T-cell (primary cell): ENCODE measurements at regions of chr2 and their contacts with region 1.

Region 1: DNA sequence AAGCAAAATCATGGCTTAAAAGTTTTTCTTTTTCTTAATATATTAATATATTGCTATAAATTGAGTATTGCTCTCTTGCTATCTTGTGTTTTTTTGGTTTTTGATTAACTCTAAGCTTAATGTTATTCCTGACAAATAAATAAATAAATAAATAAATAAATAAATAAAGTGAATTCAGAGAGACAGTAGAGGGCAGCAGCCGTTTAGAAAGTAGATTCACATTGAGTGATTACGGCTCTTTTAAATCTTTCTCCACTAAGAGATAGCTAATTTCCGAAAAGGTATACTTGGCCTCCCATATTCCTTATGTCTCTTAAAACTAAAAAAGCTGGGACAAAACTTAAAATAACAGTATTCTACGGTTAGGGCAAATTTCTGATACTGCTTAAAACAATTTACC is 34.3 kb downstream of the MSH2 start:
- DNase-seq: peak in 1 of 35 experiments; percentile 12
- ATAC-seq: no peak
- H3K4me3 ChIP-seq: no peak overlapping the region
- H3K4me3 Mint-ChIP-seq: no peak overlapping the region
- H3K27ac ChIP-seq: no peak overlapping the region
- H3K27ac Mint-ChIP-seq: no peak overlapping the region
- H3K4me1 ChIP-seq: no peaks in the 10 kb centered on the region
- H3K4me1 Mint-ChIP-seq: peaks cover 0 to 2% (median 0%) of the 10 kb centered on the region in 3 donors
- H3K27me3 ChIP-seq: no peaks in the 10 kb centered on the region
- H3K27me3 Mint-ChIP-seq: no peaks in the 10 kb centered on the region

Region 2: GRCh38 chr2:47414682-47415458 is 22.4 kb before region 1 on chr2:
- CTCF ChIA-PET with region 1: no interaction called
- POLR2A ChIA-PET with region 1: interaction called in 1 of 2 experiments, 10 read pairs
- DNase-seq: no peak
- ATAC-seq: no peak
- H3K4me3 ChIP-seq: no peak overlapping the region
- H3K4me3 Mint-ChIP-seq: no peak overlapping the region
- H3K27ac ChIP-seq: no peak overlapping the region
- H3K27ac Mint-ChIP-seq: no peak overlapping the region
- H3K4me1 ChIP-seq: no peaks in the 10 kb centered on the region
- H3K4me1 Mint-ChIP-seq: peaks cover 0 to 2% (median 0%) of the 10 kb centered on the region in 3 donors
- H3K27me3 ChIP-seq: no peaks in the 10 kb centered on the region
- H3K27me3 Mint-ChIP-seq: no peaks in the 10 kb centered on the region

Region 3: DNA sequence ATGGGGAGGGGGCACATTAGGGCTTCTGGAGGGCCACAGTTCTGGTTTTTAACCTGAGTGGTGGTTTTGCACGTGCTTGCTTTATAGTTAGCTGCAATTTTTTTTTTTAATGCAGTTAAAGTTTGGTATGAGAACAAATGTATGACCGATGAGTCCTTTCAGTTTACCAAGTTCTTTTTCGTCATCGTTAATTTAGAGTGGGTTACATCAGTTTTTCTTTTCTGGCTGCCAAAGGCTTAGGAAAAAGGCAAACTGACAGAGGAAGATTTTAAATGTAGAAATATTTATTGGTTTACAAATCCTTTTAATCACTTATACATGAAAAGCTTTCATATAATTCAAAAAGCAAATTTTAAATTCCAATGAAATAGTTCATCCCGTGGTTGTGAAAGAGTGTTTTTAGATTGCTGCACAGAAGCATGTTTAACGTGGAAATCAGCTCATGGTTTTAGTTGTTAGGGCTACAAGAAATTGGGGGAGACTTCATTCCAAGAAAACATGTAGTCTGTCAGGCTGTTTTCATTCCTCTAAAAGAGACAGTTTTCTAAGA is 48.5 kb after region 1 on chr2:
- CTCF ChIA-PET with region 1: no interaction called
- POLR2A ChIA-PET with region 1: interaction called in 1 of 2 experiments, 10 read pairs
- DNase-seq: no peak
- ATAC-seq: no peak
- H3K4me3 ChIP-seq: no peak overlapping the region
- H3K4me3 Mint-ChIP-seq: no peak overlapping the region
- H3K27ac ChIP-seq: no peak overlapping the region
- H3K27ac Mint-ChIP-seq: no peak overlapping the region
- H3K4me1 ChIP-seq: peaks cover 0 to 2% of the 10 kb centered on the region in 2 experiments
- H3K4me1 Mint-ChIP-seq: peaks cover 9 to 19% (median 12%) of the 10 kb centered on the region in 3 donors
- H3K27me3 ChIP-seq: no peaks in the 10 kb centered on the region
- H3K27me3 Mint-ChIP-seq: no peaks in the 10 kb centered on the region

Region 4: DNA sequence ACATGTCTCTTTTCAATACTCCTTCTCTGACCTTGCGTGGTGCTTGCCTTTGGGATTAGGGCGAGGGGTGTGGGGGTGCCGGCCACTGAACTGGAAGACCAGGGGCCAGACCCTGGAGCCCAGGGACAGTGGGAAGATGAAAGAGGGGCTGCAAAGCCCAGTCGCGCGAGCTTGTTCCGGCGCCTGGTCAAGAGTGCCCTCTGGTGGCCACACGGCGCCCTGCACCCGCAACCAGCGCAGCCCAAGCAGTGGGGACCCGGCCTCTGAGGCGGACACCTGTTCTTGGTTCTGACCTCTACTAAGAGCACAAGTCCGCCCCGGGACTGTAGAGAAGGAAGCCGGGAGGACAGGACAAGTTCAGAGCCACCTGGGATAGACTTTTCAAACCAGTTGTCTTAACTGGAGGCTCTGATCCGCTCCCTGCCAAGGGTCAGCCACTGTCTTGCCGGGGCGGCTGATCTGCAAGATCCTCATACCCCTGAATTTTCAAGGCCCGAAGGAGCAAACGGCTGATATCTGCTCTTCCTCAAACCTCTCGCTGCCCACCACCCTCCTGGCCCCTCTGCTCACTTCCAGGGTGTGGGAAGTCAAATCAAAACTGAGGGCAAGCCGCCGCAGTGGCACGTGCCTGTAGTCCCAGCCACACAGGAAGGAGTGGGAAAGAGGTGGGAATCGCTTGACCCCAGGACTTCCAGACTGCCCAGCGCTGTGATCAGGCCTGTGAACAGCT is 330.8 kb after region 1 on chr2:
- CTCF ChIA-PET with region 1: interaction called in 1 of 2 experiments, 12 read pairs
- POLR2A ChIA-PET with region 1: no interaction called
- DNase-seq: peak; percentile 24 to 80 (median 59)
- ATAC-seq: peak; percentile 80 to 91 (median 88)
- H3K4me3 ChIP-seq: no peak overlapping the region
- H3K4me3 Mint-ChIP-seq: peak overlapping the region; percentile 42 to 49 (median 43)
- H3K27ac ChIP-seq: no peak overlapping the region
- H3K27ac Mint-ChIP-seq: no peak overlapping the region
- H3K4me1 ChIP-seq: peaks cover 0 to 8% of the 10 kb centered on the region in 2 experiments
- H3K4me1 Mint-ChIP-seq: peaks cover 3 to 6% (median 5%) of the 10 kb centered on the region in 3 donors
- H3K27me3 ChIP-seq: peaks cover 0 to 13% of the 10 kb centered on the region in 2 experiments
- H3K27me3 Mint-ChIP-seq: peaks cover 0 to 2% of the 10 kb centered on the region in 2 donors